MCF 10A (cell line): ENCODE measurements at regions of chr12 and their contacts with region 1.

Region 1: DNA sequence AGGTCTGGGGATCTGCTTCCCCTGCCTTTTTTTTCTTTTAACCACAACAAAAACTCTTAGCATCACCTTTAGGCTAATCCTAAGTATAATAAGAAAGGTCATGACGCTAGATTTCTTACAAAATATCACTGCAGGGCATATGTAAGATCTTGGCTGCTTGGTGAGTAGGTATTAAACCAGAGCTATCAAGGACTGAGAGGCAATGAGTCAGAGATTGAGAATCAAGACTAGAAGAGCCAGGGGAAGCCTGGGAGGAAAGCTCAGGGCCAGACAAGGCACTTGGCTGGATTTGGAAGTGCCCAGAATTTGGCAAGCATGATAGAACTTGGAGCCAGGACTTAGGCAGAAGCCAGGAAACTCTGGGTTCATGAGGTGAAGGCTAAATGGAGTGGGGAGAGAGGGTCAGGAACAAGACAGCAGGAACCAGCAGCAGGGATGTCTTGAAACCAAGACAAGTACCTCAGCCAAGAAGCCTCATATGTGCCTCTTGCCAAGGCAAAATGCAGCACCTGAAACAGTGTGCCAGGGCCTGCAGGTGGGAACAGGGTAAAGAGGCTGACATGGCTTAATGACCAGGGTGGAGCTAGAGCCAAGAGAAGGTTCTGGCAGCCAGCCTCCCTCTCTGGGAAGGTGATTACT is 49.9 kb downstream of the PTHLH start:
- DNase-seq: peak; percentile 98
- H3K4me3 Mint-ChIP-seq: no peak overlapping the region
- H3K27ac Mint-ChIP-seq: peak overlapping the region; percentile 20
- H3K4me1 Mint-ChIP-seq: peaks cover 19% of the 10 kb centered on the region
- H3K27me3 Mint-ChIP-seq: no peaks in the 10 kb centered on the region
- CTCF ChIP-seq: no peak

Region 2: DNA sequence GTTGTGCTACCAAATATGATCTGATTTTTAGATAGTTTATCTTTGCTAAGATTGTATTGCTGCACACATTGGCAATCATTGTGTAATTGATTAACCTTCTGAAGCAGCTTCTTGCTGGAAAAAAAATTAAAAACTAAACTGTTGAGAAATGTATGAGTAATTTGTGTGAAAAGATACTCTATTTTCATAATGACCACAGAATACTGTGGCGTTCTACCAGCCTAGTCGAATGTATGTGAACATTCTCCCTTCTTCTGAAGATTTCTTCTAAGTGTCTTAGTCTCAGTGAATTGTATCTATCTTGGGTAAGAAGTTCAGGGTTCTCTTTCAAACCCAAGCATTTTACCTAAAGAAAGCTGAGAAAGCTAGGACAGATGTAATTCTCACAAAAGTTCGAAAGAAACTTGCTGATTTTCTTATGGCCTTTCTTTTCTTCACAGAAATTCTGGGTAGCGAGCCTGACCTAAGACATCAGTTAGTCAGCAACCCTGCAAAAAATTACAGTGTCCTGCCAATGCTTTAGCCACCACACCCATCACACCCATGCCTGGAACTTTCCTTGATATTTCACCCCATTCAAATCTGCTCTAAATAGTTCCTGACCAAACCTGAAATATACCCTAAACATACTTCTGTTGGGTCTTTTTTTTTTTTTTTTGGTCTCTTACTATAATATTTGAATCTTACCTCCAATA is 813.1 kb before region 1 on chr12:
- CTCF ChIA-PET with region 1: no interaction called
- POLR2A ChIA-PET with region 1: no interaction called
- intact Hi-C with region 1: no loop called
- DNase-seq: peak; percentile 25
- H3K4me3 Mint-ChIP-seq: no peak overlapping the region
- H3K27ac Mint-ChIP-seq: peak overlapping the region; percentile 9
- H3K4me1 Mint-ChIP-seq: peaks cover 7% of the 10 kb centered on the region
- H3K27me3 Mint-ChIP-seq: no peaks in the 10 kb centered on the region
- CTCF ChIP-seq: no peak

Region 3: GRCh38 chr12:27733052-27733656 is 189.5 kb before region 1 on chr12:
- CTCF ChIA-PET with region 1: no interaction called
- POLR2A ChIA-PET with region 1: no interaction called
- intact Hi-C with region 1: no loop called
- DNase-seq: peak; percentile 41
- H3K4me3 Mint-ChIP-seq: no peak overlapping the region
- H3K27ac Mint-ChIP-seq: no peak overlapping the region
- H3K4me1 Mint-ChIP-seq: peaks cover 5% of the 10 kb centered on the region
- H3K27me3 Mint-ChIP-seq: no peaks in the 10 kb centered on the region
- CTCF ChIP-seq: peak; percentile 91

Region 4: GRCh38 chr12:27828196-27828595 is 94.4 kb before region 1 on chr12:
- CTCF ChIA-PET with region 1: no interaction called
- POLR2A ChIA-PET with region 1: no interaction called
- intact Hi-C with region 1: no loop called
- DNase-seq: no peak
- H3K4me3 Mint-ChIP-seq: no peak overlapping the region
- H3K27ac Mint-ChIP-seq: no peak overlapping the region
- H3K4me1 Mint-ChIP-seq: no peaks in the 10 kb centered on the region
- H3K27me3 Mint-ChIP-seq: no peaks in the 10 kb centered on the region
- CTCF ChIP-seq: no peak

Region 5: DNA sequence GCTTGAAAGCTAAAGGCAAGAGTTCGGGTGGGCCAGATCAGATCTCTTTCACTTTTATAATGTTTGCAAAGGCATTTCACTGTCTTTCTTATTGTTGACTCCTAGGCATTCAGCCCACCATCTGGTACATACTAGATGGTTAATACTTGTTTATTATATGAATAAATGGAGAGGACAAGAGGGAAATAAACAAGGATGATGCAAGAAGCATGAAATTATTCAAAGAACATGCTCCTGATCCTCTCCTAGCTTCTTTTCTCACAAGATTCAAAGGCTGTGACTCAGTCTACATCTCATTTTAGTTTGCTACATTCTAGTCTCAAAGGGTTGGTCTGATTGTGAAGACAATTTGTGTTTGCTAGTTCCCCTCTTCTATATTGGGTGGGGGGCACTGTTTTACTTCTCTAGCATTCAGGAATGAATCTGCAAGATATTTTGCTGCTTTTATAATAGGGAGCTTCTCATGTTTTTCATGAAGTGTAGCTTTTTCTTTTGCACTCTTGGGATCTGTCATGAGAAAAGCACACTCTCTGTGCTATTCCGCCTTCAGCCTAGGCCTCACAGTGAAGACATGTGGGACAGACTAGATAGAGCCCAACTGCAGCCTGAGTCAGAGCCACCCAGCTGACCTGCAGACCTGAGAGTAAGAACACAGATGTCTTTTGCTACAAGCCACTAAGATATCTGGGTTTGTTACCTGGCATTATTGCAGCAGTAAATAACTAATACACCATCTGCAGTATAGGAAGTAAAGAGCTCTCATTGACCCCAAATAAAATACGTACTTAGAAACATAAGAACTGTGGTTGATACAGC is 15.8 kb before region 1 on chr12:
- CTCF ChIA-PET with region 1: no interaction called
- POLR2A ChIA-PET with region 1: interaction called, 11 read pairs
- intact Hi-C with region 1: no loop called
- DNase-seq: no peak
- H3K4me3 Mint-ChIP-seq: no peak overlapping the region
- H3K27ac Mint-ChIP-seq: peak overlapping the region; percentile 5
- H3K4me1 Mint-ChIP-seq: no peaks in the 10 kb centered on the region
- H3K27me3 Mint-ChIP-seq: no peaks in the 10 kb centered on the region
- CTCF ChIP-seq: no peak